ENCODE measurements at regions of chr17 and their contacts with region 1.

Region 1: GRCh38 chr17:2401426-2402221 is 764 bp upstream of the MNT start:
- DNase-seq: peak; percentile 100
- H3K4me3 Mint-ChIP-seq: peak overlapping the region; percentile 99
- H3K27ac Mint-ChIP-seq: peak overlapping the region; percentile 98
- H3K4me1 Mint-ChIP-seq: peaks cover 54% of the 10 kb centered on the region
- H3K27me3 Mint-ChIP-seq: no peaks in the 10 kb centered on the region

Region 2: GRCh38 chr17:1716076-1716995 is 685.3 kb before region 1 on chr17:
- intact Hi-C with region 1: loop called (anchors 10 kb)
- DNase-seq: peak; percentile 100
- H3K4me3 Mint-ChIP-seq: peak overlapping the region; percentile 95
- H3K27ac Mint-ChIP-seq: peak overlapping the region; percentile 98
- H3K4me1 Mint-ChIP-seq: peaks cover 28% of the 10 kb centered on the region
- H3K27me3 Mint-ChIP-seq: peaks cover 5% of the 10 kb centered on the region

Region 3: DNA sequence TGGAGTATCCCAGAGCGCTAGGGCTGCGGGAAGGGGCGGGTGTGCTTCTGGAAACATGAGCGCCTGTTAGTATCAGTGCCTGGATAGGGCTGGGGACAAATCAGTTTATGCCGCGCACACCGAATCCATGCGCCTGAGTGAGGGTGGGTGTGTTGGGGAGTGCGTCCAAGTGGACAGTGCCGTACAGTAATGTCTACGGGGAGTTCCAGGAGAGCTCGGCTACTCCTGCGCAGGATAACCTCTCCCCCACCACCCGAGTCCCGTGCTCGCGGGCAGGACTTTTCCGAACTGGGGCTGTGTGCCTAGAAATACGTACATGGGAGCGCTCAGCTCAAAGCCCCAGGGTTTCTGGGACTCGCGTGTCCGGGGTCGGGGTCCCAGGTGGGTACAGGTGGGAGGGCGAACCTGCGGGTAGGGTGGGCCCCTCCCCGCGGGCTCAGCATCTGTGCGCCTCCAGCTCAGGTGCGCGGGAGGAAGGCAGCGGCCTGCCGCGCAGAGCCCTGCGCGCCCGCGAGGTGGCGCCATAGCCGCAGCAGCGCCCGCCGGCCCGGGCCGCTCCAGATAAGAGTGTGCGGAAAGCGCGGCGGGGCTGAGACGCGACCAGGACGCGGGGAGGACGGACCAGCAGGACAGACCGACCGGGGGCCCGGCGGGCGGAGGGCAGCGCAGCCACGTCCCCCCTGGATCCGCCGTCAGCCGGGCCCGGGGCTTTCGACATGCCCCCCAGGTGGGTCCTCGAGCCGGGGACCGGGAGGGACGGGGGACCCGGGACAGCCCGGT is 346.9 kb before region 1 on chr17 and contains the start of gene HIC1:
- intact Hi-C with region 1: loop called (anchors 2 kb)
- DNase-seq: peak; percentile 96
- H3K4me3 Mint-ChIP-seq: peak within 1 kb of the TSS; percentile 86
- H3K27ac Mint-ChIP-seq: peak within 1 kb of the TSS; percentile 88
- H3K4me1 Mint-ChIP-seq: peaks cover 22% of the 10 kb centered on the region
- H3K27me3 Mint-ChIP-seq: peaks cover 9% of the 10 kb centered on the region
- total RNA-seq, gene HIC1: 49.4 and 51.6 TPM in 2 replicates

Region 4: DNA sequence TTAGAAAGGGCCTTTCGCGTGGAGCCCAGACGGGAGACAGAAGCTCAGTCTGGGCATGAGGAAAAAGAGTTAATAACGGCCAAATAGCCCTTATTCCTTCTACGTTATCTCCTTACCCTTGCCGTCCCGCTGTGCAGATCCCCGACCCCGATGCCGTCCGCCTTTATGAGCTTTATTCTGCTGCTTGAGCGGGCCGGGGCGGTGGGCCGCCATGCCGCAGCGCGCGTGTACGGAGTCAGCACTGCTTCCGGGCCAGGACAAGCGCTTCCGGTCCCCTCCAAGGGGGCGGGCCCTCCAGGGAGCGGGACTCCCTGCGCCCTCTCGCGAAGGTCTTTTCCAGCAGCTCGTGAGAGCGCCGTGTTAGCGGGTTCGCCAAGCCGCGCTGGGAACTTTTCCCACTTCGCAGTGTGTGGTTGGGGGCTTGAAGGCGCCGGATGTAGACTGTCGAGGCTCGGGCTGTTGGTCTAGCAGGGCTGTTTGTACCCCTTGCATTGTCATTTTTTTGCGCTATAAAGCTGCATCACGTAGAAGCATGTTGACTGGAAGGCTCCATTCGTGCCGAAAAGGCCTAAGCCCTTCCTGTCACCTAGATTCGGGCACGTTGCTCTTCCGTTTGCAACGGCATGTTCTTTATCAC is 65.3 kb before region 1 on chr17 and contains the start of gene TSR1:
- intact Hi-C with region 1: loop called (anchors 2 kb)
- DNase-seq: peak; percentile 98
- H3K4me3 Mint-ChIP-seq: no peak within 1 kb of the TSS
- H3K27ac Mint-ChIP-seq: peak within 1 kb of the TSS; percentile 96
- H3K4me1 Mint-ChIP-seq: peaks cover 14% of the 10 kb centered on the region
- H3K27me3 Mint-ChIP-seq: no peaks in the 10 kb centered on the region
- total RNA-seq, gene TSR1: 97.9 and 99.3 TPM in 2 replicates

Region 5: GRCh38 chr17:2511462-2512369 is 110.1 kb after region 1 on chr17 and contains the start of gene METTL16:
- intact Hi-C with region 1: loop called (anchors 5 kb)
- DNase-seq: peak; percentile 99
- H3K4me3 Mint-ChIP-seq: peak within 1 kb of the TSS; percentile 56
- H3K27ac Mint-ChIP-seq: no peak within 1 kb of the TSS
- H3K4me1 Mint-ChIP-seq: peaks cover 13% of the 10 kb centered on the region
- H3K27me3 Mint-ChIP-seq: peaks cover 3% of the 10 kb centered on the region
- total RNA-seq, gene METTL16: 59.5 and 61.1 TPM in 2 replicates

Region 6: GRCh38 chr17:2711601-2712299 is 310.1 kb after region 1 on chr17 and contains the start of gene CLUH:
- intact Hi-C with region 1: loop called (anchors 1 kb)
- DNase-seq: peak; percentile 99
- H3K4me3 Mint-ChIP-seq: peak within 1 kb of the TSS; percentile 94
- H3K27ac Mint-ChIP-seq: peak within 1 kb of the TSS; percentile 92
- H3K4me1 Mint-ChIP-seq: peaks cover 35% of the 10 kb centered on the region
- H3K27me3 Mint-ChIP-seq: no peaks in the 10 kb centered on the region
- total RNA-seq, gene CLUH: 178 and 193 TPM in 2 replicates

Measured in activated CD4-positive, alpha-beta T cell treated with anti-CD3 and anti-CD28 coated beads, Interleukin-2, amount 10 ng/mL, durations not matched to agents 24 days and 14 days (primary cell).